ENCODE measurements at regions of chr1 and their contacts with region 1.

Region 1: DNA sequence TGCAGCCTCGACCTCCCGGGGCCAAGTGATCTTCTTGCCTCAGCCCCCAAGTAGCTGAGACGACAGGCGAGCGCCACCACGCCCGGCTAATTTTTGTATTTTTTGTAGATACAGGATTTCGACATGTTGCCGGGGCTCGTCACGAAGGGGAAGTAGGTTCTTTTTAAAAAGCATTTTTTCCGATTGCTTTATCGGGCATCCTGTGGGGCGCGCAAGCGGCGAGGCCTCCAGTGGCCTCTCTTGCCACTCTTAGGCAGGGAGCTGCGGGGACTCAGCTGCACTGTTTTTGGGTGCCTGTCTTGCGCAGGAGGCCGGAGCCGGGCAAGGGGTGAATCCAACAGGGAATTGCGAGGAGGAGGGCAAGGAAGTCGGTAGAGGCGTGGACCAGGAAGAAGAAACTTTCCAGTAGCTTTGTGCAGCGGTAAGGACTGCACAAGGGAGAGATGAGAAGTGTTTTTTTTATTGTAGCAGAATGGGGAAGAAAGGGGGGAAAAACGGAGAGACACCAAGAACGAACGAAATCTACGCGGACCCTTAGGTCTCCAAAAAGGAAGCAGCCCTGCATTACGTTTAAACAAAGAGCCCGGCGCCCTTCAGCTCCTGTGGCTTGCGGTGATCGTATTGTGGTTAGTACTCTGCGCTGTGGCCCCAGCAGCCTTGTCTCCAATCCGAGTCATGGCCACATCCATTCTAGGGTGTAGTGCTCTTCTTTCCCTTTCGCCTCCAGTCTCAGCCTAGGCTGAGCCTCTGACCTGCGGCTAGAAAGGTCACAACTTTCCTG is 164.8 kb downstream of the PPIAL4G start:
- DNase-seq: peak; percentile 45
- ATAC-seq: peak; percentile 77
- H3K4me3 Mint-ChIP-seq: peak overlapping the region; percentile 96
- H3K27ac Mint-ChIP-seq: peak overlapping the region; percentile 92
- H3K4me1 Mint-ChIP-seq: peaks cover 35% of the 10 kb centered on the region
- H3K27me3 Mint-ChIP-seq: no peaks in the 10 kb centered on the region
- CTCF ChIP-seq: no peak

Region 2: GRCh38 chr1:147409886-147410285 is 908.4 kb before region 1 on chr1:
- CTCF ChIA-PET with region 1: no interaction called
- POLR2A ChIA-PET with region 1: no interaction called
- intact Hi-C with region 1: no loop called
- DNase-seq: no peak
- ATAC-seq: no peak
- H3K4me3 Mint-ChIP-seq: no peak overlapping the region
- H3K27ac Mint-ChIP-seq: no peak overlapping the region
- H3K4me1 Mint-ChIP-seq: no peaks in the 10 kb centered on the region
- H3K27me3 Mint-ChIP-seq: peaks cover 12% of the 10 kb centered on the region
- CTCF ChIP-seq: no peak

Region 3: DNA sequence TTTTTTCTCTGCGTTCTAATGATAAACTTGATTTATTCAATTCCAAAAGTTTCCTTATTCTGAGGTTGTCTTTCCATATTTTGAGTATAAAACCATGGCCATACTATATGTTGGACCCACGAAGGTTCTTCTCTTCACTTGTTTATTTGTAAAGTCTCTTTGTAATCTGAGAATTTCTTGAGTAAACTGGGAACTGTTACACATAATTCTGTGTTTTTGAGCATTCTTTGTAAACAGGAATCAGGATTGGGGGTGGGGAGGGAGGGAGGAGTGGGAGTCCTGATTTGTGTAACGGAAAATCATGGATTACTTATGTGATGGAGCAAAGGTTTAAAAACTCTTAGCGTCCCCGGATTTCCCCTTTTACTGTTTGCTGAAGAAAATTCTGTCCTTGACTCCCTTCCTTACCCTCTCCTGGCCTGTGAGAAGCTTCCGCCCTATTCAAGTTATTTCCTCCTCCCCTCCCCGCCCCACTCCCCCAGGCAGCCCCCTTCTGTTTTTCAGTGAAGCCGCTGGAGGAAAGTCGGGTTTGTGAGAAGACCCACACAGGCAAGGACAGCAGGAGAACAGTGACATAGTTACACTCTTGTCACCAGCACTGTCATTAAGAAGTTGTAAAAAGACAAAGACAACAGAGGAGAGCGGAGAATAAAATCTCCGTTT is 159.8 kb before region 1 on chr1:
- CTCF ChIA-PET with region 1: no interaction called
- POLR2A ChIA-PET with region 1: interaction called, 3 read pairs
- intact Hi-C with region 1: loop called (anchors 5 kb)
- DNase-seq: no peak
- ATAC-seq: no peak
- H3K4me3 Mint-ChIP-seq: peak overlapping the region; percentile 76
- H3K27ac Mint-ChIP-seq: no peak overlapping the region
- H3K4me1 Mint-ChIP-seq: peaks cover 19% of the 10 kb centered on the region
- H3K27me3 Mint-ChIP-seq: peaks cover 9% of the 10 kb centered on the region
- CTCF ChIP-seq: no peak

Region 4: DNA sequence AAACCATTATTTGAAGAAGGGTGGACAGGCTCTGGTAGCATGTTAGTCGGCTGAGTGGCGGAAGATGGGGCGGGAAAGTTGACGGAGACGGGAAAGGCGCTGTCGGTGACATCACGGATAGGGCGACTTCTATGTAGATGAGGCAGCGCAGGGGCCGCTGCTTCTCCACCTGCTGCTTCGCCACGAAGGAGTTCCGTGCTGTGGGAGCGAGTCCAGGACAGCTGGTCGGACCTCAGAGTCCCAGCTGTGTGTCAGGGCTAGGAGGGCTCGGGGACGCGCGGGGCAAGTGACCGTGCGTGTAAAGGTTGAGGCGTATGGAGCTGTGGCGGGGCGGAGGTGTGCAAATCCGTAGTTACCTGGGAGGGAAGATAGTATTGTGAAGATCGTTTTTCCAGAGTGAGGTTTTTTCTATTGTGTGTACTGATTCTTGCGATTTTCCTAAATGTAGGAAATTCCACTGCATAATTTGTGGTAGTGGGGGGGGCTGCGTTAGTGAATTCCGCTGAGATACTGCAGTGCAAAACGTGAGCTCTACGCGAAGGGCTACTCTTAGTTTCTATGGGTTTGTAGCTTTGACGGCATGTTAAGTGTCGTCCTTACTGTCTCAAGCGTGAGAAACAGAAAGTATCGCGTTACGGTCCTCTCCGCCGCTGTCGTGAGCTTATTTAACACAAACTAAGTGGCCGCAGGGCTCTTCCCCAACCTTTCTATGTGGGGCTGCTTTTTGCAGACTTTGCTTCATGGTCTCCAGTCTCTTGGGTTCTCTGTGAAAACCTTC is 55.0 kb before region 1 on chr1:
- CTCF ChIA-PET with region 1: no interaction called
- POLR2A ChIA-PET with region 1: interaction called, 23 read pairs
- intact Hi-C with region 1: loop called (anchors 1 kb)
- DNase-seq: peak; percentile 58
- ATAC-seq: peak; percentile 89
- H3K4me3 Mint-ChIP-seq: peak overlapping the region; percentile 93
- H3K27ac Mint-ChIP-seq: peak overlapping the region; percentile 98
- H3K4me1 Mint-ChIP-seq: peaks cover 14% of the 10 kb centered on the region
- H3K27me3 Mint-ChIP-seq: no peaks in the 10 kb centered on the region
- CTCF ChIP-seq: no peak

Region 5: GRCh38 chr1:148296524-148296923 is 21.8 kb before region 1 on chr1:
- CTCF ChIA-PET with region 1: no interaction called
- POLR2A ChIA-PET with region 1: no interaction called
- intact Hi-C with region 1: no loop called
- DNase-seq: no peak
- ATAC-seq: no peak
- H3K4me3 Mint-ChIP-seq: no peak overlapping the region
- H3K27ac Mint-ChIP-seq: no peak overlapping the region
- H3K4me1 Mint-ChIP-seq: no peaks in the 10 kb centered on the region
- H3K27me3 Mint-ChIP-seq: no peaks in the 10 kb centered on the region
- CTCF ChIP-seq: no peak

Region 6: DNA sequence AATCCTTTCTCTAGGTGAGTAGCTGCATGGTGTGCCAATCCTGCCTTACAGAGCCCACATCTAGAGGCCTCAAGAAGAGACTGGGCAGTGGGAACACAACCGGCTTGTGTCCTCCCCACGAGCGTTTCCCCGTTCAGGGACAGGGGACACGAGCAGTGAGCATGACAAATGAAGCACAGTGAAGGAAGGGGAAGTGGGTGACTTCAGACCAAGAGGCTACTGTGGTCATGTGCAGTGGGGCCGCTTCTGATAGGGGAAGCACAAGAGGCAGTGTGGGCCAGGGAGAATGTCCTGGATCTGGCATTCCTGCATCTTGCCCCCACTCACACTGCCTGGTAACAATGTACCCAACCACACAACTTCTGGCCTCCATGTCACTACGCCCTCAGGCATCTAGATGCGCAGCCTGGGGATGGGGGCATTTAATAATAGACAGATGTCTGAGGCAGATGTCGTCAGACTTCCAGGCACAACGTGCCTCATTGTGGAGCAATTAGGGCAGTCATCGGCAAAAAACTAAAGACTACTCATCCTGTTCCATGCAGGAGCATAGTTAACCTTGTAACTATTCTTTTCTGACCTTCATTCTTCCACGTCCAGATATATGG is 10.6 kb before region 1 on chr1:
- CTCF ChIA-PET with region 1: no interaction called
- POLR2A ChIA-PET with region 1: interaction called, 9 read pairs
- intact Hi-C with region 1: loop called (anchors 2 kb)
- DNase-seq: no peak
- ATAC-seq: no peak
- H3K4me3 Mint-ChIP-seq: no peak overlapping the region
- H3K27ac Mint-ChIP-seq: no peak overlapping the region
- H3K4me1 Mint-ChIP-seq: peaks cover 31% of the 10 kb centered on the region
- H3K27me3 Mint-ChIP-seq: peaks cover 14% of the 10 kb centered on the region
- CTCF ChIP-seq: no peak